ENCODE measurements at regions of chr11 and their contacts with region 1.

Region 1: GRCh38 chr11:68969386-68969785 is 11.4 kb downstream of the MRGPRD start:
- DNase-seq: no peak
- ATAC-seq: no peak
- H3K4me3 ChIP-seq: no peak overlapping the region
- H3K27ac ChIP-seq: no peak overlapping the region
- H3K4me1 ChIP-seq: no peaks in the 10 kb centered on the region
- H3K27me3 ChIP-seq: peaks cover 6% of the 10 kb centered on the region; the same call in 1 of the 2 replicates
- CTCF ChIP-seq: no peak

Region 2: DNA sequence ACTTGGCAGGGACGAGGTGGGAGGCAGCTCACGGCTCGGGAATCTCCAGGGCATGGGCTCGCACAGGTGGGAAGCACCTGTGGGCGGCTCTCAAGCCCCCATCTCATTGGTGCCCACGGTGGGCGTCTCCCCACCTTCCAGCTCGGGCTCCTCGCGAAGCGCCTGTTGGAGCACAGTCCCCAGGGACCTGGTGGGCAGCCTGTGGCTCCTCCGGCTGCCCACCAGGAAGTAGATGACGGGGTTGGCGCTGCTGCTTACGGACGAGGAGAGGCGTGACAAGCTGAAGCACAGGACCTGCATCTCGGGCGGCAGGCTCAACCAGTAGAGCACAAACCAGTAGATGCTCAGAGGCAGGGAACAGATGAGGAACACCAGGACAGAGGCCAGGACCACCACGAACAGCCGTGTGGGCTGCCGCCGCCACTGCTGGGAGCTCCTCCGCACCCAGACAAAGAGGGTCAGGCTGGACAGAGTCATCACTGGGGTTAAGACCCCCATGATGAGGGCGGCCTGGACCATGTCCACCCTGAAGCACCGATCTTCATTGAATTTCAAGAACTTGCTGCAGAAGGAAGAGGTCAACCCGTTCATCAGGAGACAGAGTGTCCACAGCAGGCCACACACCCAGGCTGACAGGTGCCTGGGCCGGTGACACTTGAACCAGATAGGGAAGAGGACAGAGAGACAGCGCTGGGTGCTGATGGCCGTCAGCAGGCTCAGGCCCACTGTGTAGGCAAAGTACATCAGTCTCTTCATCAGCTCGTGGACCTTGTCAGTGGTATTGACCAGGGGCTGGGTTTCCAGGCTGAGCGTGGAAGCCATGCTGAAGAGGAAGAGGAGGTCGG is 10.8 kb after region 1 on chr11:
- CTCF ChIA-PET with region 1: no interaction called
- POLR2A ChIA-PET with region 1: no interaction called
- in situ Hi-C with region 1: no loop called
- intact Hi-C with region 1: no loop called
- DNase-seq: no peak
- ATAC-seq: 0 out of 2 replicates have a peak, but pooled peaks have one; percentile 32
- H3K4me3 ChIP-seq: no peak overlapping the region
- H3K27ac ChIP-seq: no peak overlapping the region
- H3K4me1 ChIP-seq: no peaks in the 10 kb centered on the region
- H3K27me3 ChIP-seq: no peaks in the 10 kb centered on the region; the same call in 1 of the 2 replicates
- CTCF ChIP-seq: no peak

Region 3: GRCh38 chr11:69656536-69657455 is 687.4 kb after region 1 on chr11:
- CTCF ChIA-PET with region 1: no interaction called
- POLR2A ChIA-PET with region 1: interaction called, 11 read pairs
- in situ Hi-C with region 1: no loop called
- intact Hi-C with region 1: no loop called
- DNase-seq: no peak
- ATAC-seq: no peak
- H3K4me3 ChIP-seq: no peak overlapping the region
- H3K27ac ChIP-seq: no peak overlapping the region
- H3K4me1 ChIP-seq: peaks cover 30% of the 10 kb centered on the region
- H3K27me3 ChIP-seq: no peaks in the 10 kb centered on the region
- CTCF ChIP-seq: no peak